H1 (cell line): ENCODE measurements at regions of chr11 and their contacts with region 1.

Region 1: DNA sequence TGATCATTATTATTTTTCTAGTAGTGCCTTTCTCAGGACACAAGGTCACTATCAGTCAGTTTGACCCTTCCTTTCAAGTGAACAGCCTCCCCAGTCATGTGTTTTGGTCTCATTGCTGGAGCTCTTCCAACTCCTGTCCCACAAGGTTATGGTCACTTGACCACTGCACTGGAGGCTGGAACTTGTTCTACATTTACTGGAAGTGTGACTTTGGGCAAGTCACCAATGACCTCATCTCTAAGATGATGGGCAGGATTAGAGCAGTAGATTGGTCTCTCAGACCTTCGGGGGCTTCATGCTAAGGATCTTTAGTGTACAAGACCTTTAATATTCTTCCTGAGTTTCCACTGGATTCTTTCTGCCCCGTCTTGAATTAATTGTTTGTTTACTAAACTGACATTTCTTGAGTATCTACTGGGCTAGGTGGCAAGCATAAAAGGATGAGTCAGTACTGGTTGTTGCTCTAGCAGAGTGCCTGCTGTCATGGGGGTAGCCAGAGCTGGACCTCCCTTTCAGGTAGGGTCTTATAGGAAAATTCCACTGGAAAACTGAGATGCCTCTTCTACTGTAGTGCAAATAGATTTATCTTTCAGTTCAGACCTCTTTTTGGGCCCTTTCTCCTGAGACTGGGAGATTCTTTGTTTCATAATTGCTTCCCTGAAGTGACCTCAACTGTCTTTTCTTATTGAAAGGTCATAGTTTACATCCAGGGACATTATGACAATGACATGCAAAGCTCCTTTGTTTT is 106.8 kb downstream of the GRAMD1B start:
- DNase-seq: peak in 1 of 2 experiments; percentile 47
- H3K4me3 ChIP-seq: peak overlapping the region in 1 of 4 experiments; percentile 26; a peak in 1 of 8 replicates
- H3K27ac ChIP-seq: peak overlapping the region; percentile 68; the same call in 1 of the 2 replicates
- H3K4me1 ChIP-seq: peaks cover 8 to 21% (median 16%) of the 10 kb centered on the region in 4 experiments; a peak in 5 of 7 replicates
- H3K27me3 ChIP-seq: no peaks in the 10 kb centered on the region
- CTCF ChIP-seq: no peak
- EP300 ChIP-seq: no peak
- POLR2A ChIP-seq: no peak
- RAD21 ChIP-seq: no peak

Region 2: GRCh38 chr11:123450623-123451022 is 86.2 kb before region 1 on chr11:
- CTCF ChIA-PET with region 1: no interaction called
- POLR2A ChIA-PET with region 1: no interaction called
- DNase-seq: no peak
- H3K4me3 ChIP-seq: no peak overlapping the region
- H3K27ac ChIP-seq: no peak overlapping the region
- H3K4me1 ChIP-seq: peaks cover 0 to 7% (median 5%) of the 10 kb centered on the region in 4 experiments; a peak in 3 of 7 replicates
- H3K27me3 ChIP-seq: no peaks in the 10 kb centered on the region
- CTCF ChIP-seq: no peak
- EP300 ChIP-seq: no peak
- POLR2A ChIP-seq: no peak
- RAD21 ChIP-seq: no peak

Region 3: GRCh38 chr11:123519055-123519796 is 17.6 kb before region 1 on chr11:
- CTCF ChIA-PET with region 1: interaction called, 19 read pairs
- POLR2A ChIA-PET with region 1: interaction called, 3 read pairs
- DNase-seq: peak in 1 of 2 experiments; percentile 52
- H3K4me3 ChIP-seq: no peak overlapping the region
- H3K27ac ChIP-seq: no peak overlapping the region
- H3K4me1 ChIP-seq: peaks cover 12 to 22% (median 16%) of the 10 kb centered on the region in 4 experiments
- H3K27me3 ChIP-seq: no peaks in the 10 kb centered on the region
- CTCF ChIP-seq: no peak
- EP300 ChIP-seq: no peak
- POLR2A ChIP-seq: no peak
- RAD21 ChIP-seq: no peak

Region 4: GRCh38 chr11:123525511-123525918 is 11.3 kb before region 1 on chr11:
- CTCF ChIA-PET with region 1: interaction called, 26 read pairs
- POLR2A ChIA-PET with region 1: interaction called, 4 read pairs
- DNase-seq: no peak
- H3K4me3 ChIP-seq: no peak overlapping the region
- H3K27ac ChIP-seq: no peak overlapping the region
- H3K4me1 ChIP-seq: peaks cover 9 to 21% (median 14%) of the 10 kb centered on the region in 4 experiments; a peak in 6 of 7 replicates
- H3K27me3 ChIP-seq: no peaks in the 10 kb centered on the region
- CTCF ChIP-seq: no peak
- EP300 ChIP-seq: no peak
- POLR2A ChIP-seq: no peak
- RAD21 ChIP-seq: no peak

Region 5: DNA sequence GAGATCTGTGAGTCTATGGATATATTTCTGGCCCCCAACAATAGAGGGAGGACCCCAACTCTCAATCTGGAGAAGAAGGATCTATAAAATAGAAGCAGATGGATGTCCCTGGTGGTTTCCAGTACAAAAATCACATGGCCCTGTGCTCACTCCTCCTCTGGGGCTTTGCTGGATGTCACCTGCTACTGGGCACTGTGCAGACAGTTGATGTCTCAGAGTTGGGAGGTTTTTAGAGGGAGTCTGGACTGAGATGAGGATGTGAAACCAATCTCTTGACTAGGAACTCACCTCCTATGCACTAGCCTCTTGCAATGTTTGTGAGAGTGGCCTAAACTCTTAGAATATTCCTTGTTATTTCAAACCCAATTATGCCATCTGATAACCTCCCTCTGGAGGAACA is 10.3 kb after region 1 on chr11:
- CTCF ChIA-PET with region 1: interaction called, 68 read pairs
- POLR2A ChIA-PET with region 1: no interaction called
- DNase-seq: no peak
- H3K4me3 ChIP-seq: no peak overlapping the region
- H3K27ac ChIP-seq: no peak overlapping the region
- H3K4me1 ChIP-seq: peaks cover 0 to 10% (median 5%) of the 10 kb centered on the region in 4 experiments; a peak in 4 of 7 replicates
- H3K27me3 ChIP-seq: no peaks in the 10 kb centered on the region
- CTCF ChIP-seq: no peak
- EP300 ChIP-seq: no peak
- POLR2A ChIP-seq: no peak
- RAD21 ChIP-seq: no peak

Region 6: DNA sequence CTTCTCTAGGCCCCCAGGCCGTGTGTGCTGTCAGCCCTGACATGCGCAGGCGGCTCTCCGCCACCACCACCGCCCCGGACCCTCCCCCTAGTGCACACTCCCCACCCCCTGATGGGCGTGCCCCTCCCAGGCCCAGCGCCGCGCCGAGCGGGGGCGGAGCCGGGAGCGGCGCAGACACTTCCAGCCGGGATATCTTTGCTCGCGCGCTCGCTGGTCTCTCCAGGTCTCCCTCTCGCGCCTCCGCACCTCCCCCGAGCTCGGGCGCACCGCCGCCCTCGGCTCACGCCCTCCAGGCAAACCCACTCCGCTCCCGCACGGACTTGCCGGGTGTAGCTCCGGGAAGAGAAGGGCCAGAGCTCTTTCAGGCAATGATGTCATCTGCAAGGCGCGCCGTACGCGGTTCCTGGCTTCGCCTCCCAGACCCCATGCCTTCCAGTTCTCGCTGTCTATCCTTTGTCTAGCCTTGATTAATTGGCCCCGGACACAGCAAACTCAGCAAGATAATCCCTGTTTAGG is 117.8 kb after region 1 on chr11 and contains the start of gene SCN3B:
- CTCF ChIA-PET with region 1: no interaction called
- POLR2A ChIA-PET with region 1: no interaction called
- DNase-seq: peak in 1 of 2 experiments; percentile 91
- H3K4me3 ChIP-seq: peak within 1 kb of the TSS; percentile 75 to 80 (median 78)
- H3K27ac ChIP-seq: no peak within 1 kb of the TSS
- H3K4me1 ChIP-seq: peaks cover 0 to 3% (median 1%) of the 10 kb centered on the region in 4 experiments; a peak in 3 of 7 replicates
- H3K27me3 ChIP-seq: peaks cover 8 to 32% (median 21%) of the 10 kb centered on the region in 4 experiments
- CTCF ChIP-seq: no peak
- EP300 ChIP-seq: no peak
- POLR2A ChIP-seq: no peak
- RAD21 ChIP-seq: no peak
- total RNA-seq, gene SCN3B: 0.82 and 1.1 TPM in 2 replicates